A549 (cell line): ENCODE measurements at regions of chr9 and their contacts with region 1.

Region 1: GRCh38 chr9:119968836-119969707 is 599.8 kb upstream of the BRINP1 start:
- DNase-seq: peak; percentile 62 to 81
- ATAC-seq: peak; percentile 91 to 99
- H3K4me3 ChIP-seq: no peak overlapping the region
- H3K27ac ChIP-seq: no peak overlapping the region
- H3K4me1 ChIP-seq: peaks cover 4% of the 10 kb centered on the region
- CTCF ChIP-seq: peak; percentile 77
- EP300 ChIP-seq: no peak
- POLR2A ChIP-seq: no peak
- RAD21 ChIP-seq: peak; percentile 71

Region 2: DNA sequence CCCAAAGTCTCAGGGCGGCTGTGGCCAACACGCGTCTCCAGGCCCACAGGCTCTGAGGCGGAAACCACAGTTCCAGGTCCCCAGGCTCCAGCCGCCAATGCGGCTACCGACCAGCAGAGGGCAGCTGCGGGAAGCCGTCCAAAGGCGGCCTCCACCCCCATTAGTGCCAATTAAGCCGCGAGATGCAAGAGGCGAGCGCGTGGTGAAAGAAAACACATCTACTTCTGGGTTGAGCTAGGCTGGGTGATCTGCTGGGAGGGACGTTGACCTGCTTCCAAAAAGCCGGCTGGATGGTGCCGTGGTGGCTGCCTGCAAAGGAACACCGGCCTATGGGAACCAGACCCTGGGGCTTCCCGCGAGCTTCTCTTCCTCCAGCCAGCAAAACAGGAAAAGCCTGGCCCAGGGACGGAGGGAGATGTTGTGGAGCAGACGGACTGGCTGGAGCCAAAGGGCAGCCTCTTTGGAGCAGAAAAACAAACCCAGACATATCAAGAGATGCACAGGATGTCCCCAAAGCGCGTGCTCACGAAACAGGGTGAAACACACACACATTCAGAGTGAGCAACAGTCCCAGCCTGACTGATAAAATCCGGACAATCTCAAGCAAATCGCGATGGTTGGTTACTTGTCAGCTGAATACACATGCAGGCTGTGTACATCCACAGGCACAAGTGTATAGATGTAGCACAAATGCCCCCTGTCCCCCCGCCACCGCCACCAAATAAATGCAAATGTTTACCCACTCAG is 412.8 kb before region 1 on chr9:
- CTCF ChIA-PET with region 1: interaction called, 11 read pairs
- POLR2A ChIA-PET with region 1: no interaction called
- DNase-seq: peak; percentile 31 to 44
- ATAC-seq: peak; percentile 86 to 99
- H3K4me3 ChIP-seq: peak overlapping the region; percentile 29; the same call in 1 of the 3 replicates
- H3K27ac ChIP-seq: peak overlapping the region in 1 of 2 experiments; percentile 40; a peak in 1 of 6 replicates
- H3K4me1 ChIP-seq: no peaks in the 10 kb centered on the region
- CTCF ChIP-seq: peak; percentile 69
- EP300 ChIP-seq: no peak
- POLR2A ChIP-seq: no peak
- RAD21 ChIP-seq: peak; percentile 70

Region 3: GRCh38 chr9:119781886-119782285 is 187.2 kb before region 1 on chr9:
- CTCF ChIA-PET with region 1: no interaction called
- POLR2A ChIA-PET with region 1: no interaction called
- DNase-seq: no peak
- ATAC-seq: no peak
- H3K4me3 ChIP-seq: no peak overlapping the region
- H3K27ac ChIP-seq: no peak overlapping the region
- H3K4me1 ChIP-seq: no peaks in the 10 kb centered on the region
- CTCF ChIP-seq: no peak
- EP300 ChIP-seq: no peak
- POLR2A ChIP-seq: no peak
- RAD21 ChIP-seq: no peak

Region 4: DNA sequence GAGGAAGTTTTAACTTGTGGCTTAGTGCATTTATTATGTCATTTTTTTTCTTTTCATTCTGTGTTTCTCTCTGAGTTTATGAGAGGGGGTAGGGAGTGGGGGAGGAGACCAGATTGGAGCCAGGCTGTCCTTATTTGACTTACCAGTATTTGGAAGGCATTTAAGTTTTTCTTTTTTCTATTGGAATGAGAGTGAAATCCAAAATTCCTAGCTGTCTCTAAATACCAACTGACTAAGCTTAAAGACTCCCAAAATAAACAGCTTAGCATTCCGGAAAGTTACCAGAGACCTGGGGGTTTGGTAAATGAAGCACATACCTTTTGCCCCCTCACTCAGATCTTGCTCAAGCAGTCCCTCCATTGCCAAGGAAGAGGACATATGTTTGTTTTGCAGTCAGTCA is 18.0 kb before region 1 on chr9:
- CTCF ChIA-PET with region 1: interaction called, 18 read pairs
- POLR2A ChIA-PET with region 1: no interaction called
- DNase-seq: no peak
- ATAC-seq: no peak
- H3K4me3 ChIP-seq: no peak overlapping the region
- H3K27ac ChIP-seq: no peak overlapping the region
- H3K4me1 ChIP-seq: no peaks in the 10 kb centered on the region
- CTCF ChIP-seq: no peak
- EP300 ChIP-seq: no peak
- POLR2A ChIP-seq: no peak
- RAD21 ChIP-seq: no peak

Region 5: GRCh38 chr9:119986213-119986612 is 17.1 kb after region 1 on chr9:
- CTCF ChIA-PET with region 1: interaction called, 14 read pairs
- POLR2A ChIA-PET with region 1: no interaction called
- DNase-seq: no peak
- ATAC-seq: no peak
- H3K4me3 ChIP-seq: no peak overlapping the region
- H3K27ac ChIP-seq: no peak overlapping the region
- H3K4me1 ChIP-seq: no peaks in the 10 kb centered on the region
- CTCF ChIP-seq: no peak
- EP300 ChIP-seq: no peak
- POLR2A ChIP-seq: no peak
- RAD21 ChIP-seq: no peak

Region 6: DNA sequence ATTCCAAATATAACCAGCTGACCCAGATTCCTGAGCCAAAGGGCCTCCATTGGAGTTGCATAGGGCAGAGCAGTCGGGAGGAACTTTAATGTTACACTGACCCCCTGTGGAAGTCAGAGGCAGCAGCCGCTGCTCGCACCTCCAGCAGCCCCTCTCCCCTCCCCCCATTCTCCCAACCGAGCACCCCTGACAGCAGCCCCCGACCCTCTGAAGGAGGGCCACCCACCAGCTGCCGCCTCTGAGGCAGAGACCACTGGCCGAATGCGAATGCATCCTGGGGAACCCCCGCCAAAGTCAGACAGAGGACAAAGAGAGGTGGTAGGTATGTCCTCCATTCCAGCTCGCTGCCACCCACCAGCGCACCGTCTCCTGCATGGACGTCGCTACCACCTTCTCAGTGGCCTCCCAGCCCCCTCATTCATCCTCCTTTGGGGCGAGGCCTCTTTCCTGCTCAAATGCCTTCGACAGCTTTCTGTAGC is 379.9 kb after region 1 on chr9:
- CTCF ChIA-PET with region 1: interaction called, 12 read pairs
- POLR2A ChIA-PET with region 1: no interaction called
- DNase-seq: peak; percentile 62 to 73
- ATAC-seq: peak; percentile 77 to 93
- H3K4me3 ChIP-seq: no peak overlapping the region
- H3K27ac ChIP-seq: peak overlapping the region in 1 of 2 experiments; percentile 60; a peak in 3 of 6 replicates
- H3K4me1 ChIP-seq: peaks cover 7% of the 10 kb centered on the region
- CTCF ChIP-seq: peak; percentile 75
- EP300 ChIP-seq: no peak
- POLR2A ChIP-seq: no peak
- RAD21 ChIP-seq: peak; percentile 88 to 92